Posterior cingulate gyrus (tissue), 11 donors: ENCODE measurements at regions of chr12 and their contacts with region 1.

Region 1: DNA sequence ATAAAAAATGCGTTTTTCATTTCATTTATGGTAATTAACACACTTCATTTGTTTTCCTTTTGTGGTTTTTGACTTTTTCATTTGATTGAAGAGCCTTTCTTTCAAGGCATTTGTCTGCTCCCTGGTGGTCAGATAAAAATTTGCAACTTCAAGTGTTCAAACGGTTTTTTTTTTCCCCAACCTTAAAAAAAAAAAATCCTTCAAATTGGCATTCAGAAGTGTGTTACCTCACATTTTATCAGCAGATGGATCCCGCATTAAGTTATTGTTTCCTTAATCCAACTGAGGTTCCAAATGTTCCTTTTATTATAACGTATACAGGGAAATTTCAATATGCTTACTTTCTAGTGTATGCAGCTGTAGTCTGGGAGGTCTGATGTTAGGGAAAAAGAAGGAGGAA is 47.2 kb downstream of the MYF5 start:
- DNase-seq: no peak

Region 2: DNA sequence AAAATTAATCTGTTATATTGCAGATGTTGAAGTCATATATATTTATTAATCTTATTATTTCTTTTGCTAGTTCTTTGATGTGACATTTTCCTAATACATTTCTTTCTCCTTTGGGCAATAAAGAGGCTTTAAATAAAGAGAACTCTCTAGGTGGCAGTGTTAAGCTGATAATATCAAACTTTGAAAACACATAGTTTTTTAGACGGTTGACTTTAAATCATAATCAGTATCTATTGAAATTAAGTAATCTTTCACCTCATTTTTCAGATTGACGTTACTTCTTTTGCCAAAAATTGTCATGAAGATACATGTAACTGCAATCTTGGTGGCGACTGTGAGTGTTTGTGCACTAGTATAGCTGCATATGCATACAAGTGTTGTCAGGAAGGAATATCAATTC is 450.7 kb before region 1 on chr12:
- intact Hi-C with region 1: loop called (anchors 10 kb)
- DNase-seq: no peak

Region 3: GRCh38 chr12:80412369-80412953 is 351.4 kb before region 1 on chr12:
- intact Hi-C with region 1: loop called (anchors 2 kb)
- DNase-seq: no peak

Region 4: DNA sequence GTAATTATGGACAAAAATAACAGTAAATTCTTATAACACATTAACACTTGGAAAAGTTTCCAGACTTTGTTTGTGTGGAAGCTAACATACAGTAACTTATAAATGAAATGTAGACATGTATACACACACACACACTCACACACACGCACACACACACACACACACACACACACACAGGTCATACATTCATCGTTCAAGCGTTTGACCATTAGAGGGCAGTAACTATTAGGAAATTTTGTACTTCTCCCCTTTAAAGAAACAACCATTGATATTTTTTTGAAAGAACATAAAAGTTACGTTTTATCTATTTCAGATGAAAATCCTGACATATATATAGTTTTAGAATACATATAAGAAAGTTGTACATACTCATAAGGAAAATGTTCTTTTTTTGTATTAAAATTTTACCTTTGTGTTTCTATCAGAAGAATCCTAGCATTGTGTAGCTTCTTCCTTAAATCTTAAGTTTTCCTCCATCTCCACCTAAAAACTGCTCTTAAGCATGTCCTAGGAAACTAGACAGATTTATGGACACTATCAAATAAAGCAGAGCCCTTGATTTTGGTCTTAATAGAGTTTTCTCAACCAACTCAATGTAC is 290.9 kb before region 1 on chr12:
- intact Hi-C with region 1: loop called (anchors 10 kb)
- DNase-seq: peak in 1 of 10 donors; percentile 7

Region 5: DNA sequence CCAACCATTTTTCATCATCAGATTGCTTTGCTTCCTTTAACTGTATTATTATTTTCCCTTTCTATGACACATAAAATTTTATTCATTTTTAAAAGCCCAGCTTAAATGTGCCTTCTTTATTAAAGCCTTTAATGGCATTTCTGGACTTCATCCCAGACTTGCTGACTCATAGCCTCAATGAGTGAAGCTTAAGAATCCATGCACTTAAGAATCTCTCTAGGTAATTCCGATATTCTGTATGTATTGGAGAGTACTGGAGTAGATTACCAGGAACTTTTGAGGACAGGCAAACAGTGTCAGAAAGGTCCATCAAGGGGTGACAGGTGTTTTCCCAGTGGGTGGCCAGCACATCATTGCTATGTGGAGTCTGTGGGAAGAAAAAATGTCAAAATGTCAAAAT is 212.0 kb before region 1 on chr12:
- intact Hi-C with region 1: no loop called
- DNase-seq: no peak

Region 6: DNA sequence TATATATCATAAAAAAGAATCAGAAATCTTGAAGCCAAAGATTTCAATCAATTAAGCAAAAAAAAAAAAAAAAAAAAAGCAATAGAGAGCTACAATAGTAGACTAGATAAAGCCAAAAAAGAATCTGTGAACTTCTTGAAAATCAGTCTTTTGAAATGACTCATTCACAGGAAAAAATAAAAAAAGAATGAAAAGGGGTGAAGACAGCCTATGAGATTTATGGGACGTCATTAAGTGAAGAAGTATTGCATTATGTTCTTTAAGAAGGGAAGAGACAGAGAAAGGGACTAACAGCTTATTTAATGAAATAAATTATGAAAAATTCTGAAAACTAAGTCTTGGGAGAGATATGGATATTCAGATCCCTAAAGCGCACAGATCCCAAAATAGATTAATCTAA is 417.8 kb after region 1 on chr12:
- intact Hi-C with region 1: no loop called
- DNase-seq: no peak